ENCODE measurements at regions of chr11 and their contacts with region 1.

Region 1: GRCh38 chr11:65225279-65226102 is 36.3 kb upstream of the POLA2 start:
- DNase-seq: peak in 1 of 2 experiments; percentile 77
- H3K4me3 ChIP-seq: peak overlapping the region; percentile 37 to 69 (median 56)
- H3K27ac ChIP-seq: peak overlapping the region; percentile 12; the same call in 1 of the 2 replicates
- H3K4me1 ChIP-seq: peaks cover 0 to 9% (median 7%) of the 10 kb centered on the region in 4 experiments; a peak in 6 of 7 replicates
- H3K27me3 ChIP-seq: no peaks in the 10 kb centered on the region
- CTCF ChIP-seq: peak; percentile 46 to 51 (median 49)
- EP300 ChIP-seq: no peak
- POLR2A ChIP-seq: peak in 1 of 2 experiments; percentile 58; a peak in 1 of 3 replicates
- RAD21 ChIP-seq: peak; percentile 59 to 66

Region 2: GRCh38 chr11:65236194-65237059 is 10.9 kb after region 1 on chr11:
- CTCF ChIA-PET with region 1: interaction called, 35 read pairs
- POLR2A ChIA-PET with region 1: interaction called, 29 read pairs
- DNase-seq: no peak
- H3K4me3 ChIP-seq: no peak overlapping the region
- H3K27ac ChIP-seq: no peak overlapping the region
- H3K4me1 ChIP-seq: no peaks in the 10 kb centered on the region
- H3K27me3 ChIP-seq: no peaks in the 10 kb centered on the region
- CTCF ChIP-seq: no peak
- EP300 ChIP-seq: no peak
- POLR2A ChIP-seq: no peak
- RAD21 ChIP-seq: no peak

Region 3: DNA sequence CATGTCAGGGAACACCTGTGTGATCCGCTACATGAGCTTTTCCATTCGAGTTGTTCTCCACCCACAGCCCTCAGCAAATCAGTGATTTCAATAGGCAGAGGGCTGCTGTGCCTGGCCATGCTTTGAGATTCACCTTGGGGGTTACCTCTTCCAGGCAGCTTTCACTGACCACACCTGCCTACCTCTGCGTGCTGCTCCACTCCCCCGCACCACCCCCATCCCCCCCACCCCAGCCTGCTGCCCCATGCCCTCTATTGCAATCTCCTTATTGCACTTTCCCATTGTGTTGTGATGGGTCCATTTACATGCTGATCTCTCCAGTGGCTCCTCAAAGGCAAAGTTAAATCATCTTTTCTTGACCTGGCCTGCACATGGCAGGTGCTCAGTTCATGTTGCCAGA is 18.3 kb after region 1 on chr11:
- CTCF ChIA-PET with region 1: interaction called, 258 read pairs
- POLR2A ChIA-PET with region 1: interaction called, 60 read pairs
- DNase-seq: no peak
- H3K4me3 ChIP-seq: no peak overlapping the region
- H3K27ac ChIP-seq: no peak overlapping the region
- H3K4me1 ChIP-seq: peaks cover 3 to 12% (median 5%) of the 10 kb centered on the region in 4 experiments; a peak in 5 of 7 replicates
- H3K27me3 ChIP-seq: no peaks in the 10 kb centered on the region
- CTCF ChIP-seq: no peak
- EP300 ChIP-seq: no peak
- POLR2A ChIP-seq: no peak
- RAD21 ChIP-seq: no peak; a peak in 1 of 4 replicates

Region 4: DNA sequence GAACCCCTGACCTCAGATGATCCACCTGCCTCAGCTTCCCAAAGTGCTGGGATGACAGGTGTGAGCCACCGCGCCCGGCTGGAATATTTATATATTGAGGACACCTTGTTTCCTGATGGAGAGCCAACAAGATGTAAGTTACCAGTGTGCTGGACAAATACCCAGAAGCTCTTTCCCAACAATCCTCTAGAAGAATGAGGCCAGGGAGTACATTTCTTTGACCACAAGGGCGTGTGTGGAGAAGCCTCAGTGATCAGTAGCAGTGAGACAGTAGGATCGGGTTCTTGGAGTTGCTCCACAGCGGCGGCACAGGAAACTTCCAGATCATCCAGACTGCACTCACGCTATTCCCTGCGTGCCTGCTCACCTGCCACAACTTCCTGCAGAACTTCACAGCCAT is 26.0 kb after region 1 on chr11:
- CTCF ChIA-PET with region 1: interaction called, 258 read pairs
- POLR2A ChIA-PET with region 1: interaction called, 60 read pairs
- DNase-seq: no peak
- H3K4me3 ChIP-seq: no peak overlapping the region
- H3K27ac ChIP-seq: no peak overlapping the region
- H3K4me1 ChIP-seq: no peaks in the 10 kb centered on the region; a peak in 2 of 7 replicates
- H3K27me3 ChIP-seq: no peaks in the 10 kb centered on the region
- CTCF ChIP-seq: no peak
- EP300 ChIP-seq: no peak
- POLR2A ChIP-seq: no peak
- RAD21 ChIP-seq: no peak

Region 5: GRCh38 chr11:65261591-65262380 is 36.3 kb after region 1 on chr11 and contains the start of gene POLA2:
- CTCF ChIA-PET with region 1: interaction called, 13 read pairs
- POLR2A ChIA-PET with region 1: interaction called, 5 read pairs
- DNase-seq: peak; percentile 86 to 92
- H3K4me3 ChIP-seq: peak within 1 kb of the TSS; percentile 74 to 83 (median 81)
- H3K27ac ChIP-seq: peak within 1 kb of the TSS; percentile 46
- H3K4me1 ChIP-seq: peaks cover 0 to 3% (median under 1%) of the 10 kb centered on the region in 4 experiments; a peak in 2 of 7 replicates
- H3K27me3 ChIP-seq: no peaks in the 10 kb centered on the region
- CTCF ChIP-seq: no peak
- EP300 ChIP-seq: no peak
- POLR2A ChIP-seq: peak in 1 of 2 experiments; percentile 75; a peak in 2 of 3 replicates
- RAD21 ChIP-seq: no peak
- total RNA-seq, gene POLA2: 31.2 and 34.6 TPM in 2 replicates

Measured in H1 (cell line).